ENCODE measurements at regions of chr1 and their contacts with region 1.

Region 1: DNA sequence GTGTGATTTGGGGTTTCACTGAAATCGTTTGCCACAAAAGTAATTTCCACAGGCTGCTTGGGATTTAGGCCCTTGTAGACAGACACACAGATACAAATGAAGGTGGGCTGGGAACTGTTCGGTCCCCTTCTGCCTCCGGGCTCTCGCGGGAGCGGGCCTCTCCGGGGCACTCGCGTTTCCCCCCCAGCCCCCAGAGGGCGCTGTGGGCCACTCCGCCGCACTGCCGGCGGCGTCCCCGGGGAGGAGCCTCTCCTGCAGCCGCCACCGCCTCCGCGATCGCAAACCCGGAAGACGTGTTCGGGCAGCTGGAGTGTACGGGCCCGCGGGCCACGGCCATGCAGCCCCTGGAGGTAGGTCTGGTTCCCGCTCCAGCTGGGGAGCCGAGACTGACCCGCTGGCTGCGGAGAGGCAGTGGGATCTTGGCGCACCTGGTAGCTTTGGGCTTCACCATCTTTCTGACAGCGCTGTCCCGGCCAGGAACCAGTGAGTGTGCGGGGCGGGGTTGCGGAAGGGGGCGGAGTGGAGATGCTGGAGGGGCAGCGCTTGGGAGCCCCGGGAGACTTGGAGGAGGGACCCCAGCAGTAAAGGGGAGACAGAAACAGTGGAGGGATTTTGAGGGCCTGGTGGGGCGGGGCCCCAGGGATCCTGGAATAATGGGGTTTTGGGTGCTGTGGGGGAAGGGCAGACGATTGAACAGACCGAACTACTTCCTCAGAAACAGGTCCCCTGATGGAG is at the start of gene CYB561D1:
- DNase-seq: peak; percentile 95
- H3K4me3 ChIP-seq: peak within 1 kb of the TSS; percentile 96 to 100
- H3K27ac ChIP-seq: peak within 1 kb of the TSS; percentile 64 to 81; a peak in 3 of 4 replicates
- H3K4me1 ChIP-seq: peaks cover 0 to 19% of the 10 kb centered on the region in 2 experiments; a peak in 2 of 4 replicates
- H3K27me3 ChIP-seq: no peaks in the 10 kb centered on the region
- CTCF ChIP-seq: peak; percentile 89
- EP300 ChIP-seq: peak; percentile 27 to 38; a peak in 1 of 4 replicates
- RAD21 ChIP-seq: peak; percentile 51
- polyA plus RNA-seq, gene CYB561D1: 5.4 and 8.9 TPM in 2 replicates

Region 2: GRCh38 chr1:109483672-109484518 is 10.1 kb before region 1 on chr1 and contains the start of gene ATXN7L2:
- CTCF ChIA-PET with region 1: interaction called, 238 read pairs
- POLR2A ChIA-PET with region 1: no interaction called
- DNase-seq: peak; percentile 100
- H3K4me3 ChIP-seq: peak within 1 kb of the TSS; percentile 64 to 82
- H3K27ac ChIP-seq: peak within 1 kb of the TSS; percentile 70 to 93
- H3K4me1 ChIP-seq: peaks cover 6 to 15% of the 10 kb centered on the region in 2 experiments; a peak in 2 of 4 replicates
- H3K27me3 ChIP-seq: peaks cover 23% of the 10 kb centered on the region
- CTCF ChIP-seq: no peak
- EP300 ChIP-seq: 0 out of 4 replicates have a peak, but pooled peaks of 1 of the 2 experiments have one; percentile 18
- RAD21 ChIP-seq: no peak
- polyA plus RNA-seq, gene ATXN7L2: 3.9 and 4.0 TPM in 2 replicates

Region 3: DNA sequence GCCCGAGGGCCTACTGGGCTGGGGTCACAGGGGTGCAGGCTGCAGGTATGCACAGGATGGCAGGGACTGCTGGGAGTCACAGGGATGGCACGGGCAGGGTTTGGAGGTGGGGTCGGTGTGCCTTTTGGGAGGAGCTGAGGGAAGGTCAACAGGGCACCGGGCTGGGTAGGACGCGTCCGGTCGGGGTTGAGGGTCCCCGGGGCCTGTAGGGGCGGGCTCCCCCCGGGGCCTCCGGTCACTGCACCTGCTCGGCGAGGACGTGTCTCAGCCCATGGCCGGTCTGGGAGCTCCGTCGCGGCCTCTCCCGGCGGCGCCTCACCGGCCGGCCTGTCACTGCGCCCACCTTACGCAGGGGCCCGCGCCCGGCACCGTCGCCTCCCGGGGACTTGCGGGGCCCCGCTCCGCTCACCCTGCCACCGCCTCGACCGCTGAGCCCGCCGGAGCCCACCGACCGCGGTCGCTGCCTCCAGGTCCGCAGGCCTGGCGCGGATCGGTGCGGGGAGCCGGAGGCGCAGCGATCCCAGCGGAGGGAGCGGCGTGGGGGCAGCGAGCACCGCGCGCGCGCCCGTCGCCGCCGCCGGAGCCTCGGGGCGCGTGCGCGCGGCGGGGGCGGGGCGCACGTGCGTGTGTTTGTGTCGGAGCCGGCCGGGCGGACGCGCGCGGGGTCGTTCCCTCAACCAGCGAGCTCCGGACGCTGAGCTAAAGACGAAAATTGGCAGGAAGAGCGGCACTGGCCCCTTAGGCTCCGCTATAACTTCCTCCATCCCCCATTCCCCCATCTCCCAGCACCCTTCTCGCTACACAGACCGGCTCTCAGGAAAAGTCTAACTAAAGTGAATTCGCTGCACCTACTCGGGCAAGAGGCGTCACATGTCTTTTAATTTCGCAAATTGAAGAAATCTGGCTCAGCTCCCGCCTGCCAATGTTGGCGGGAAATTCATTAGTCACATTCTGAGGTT is 15.5 kb after region 1 on chr1 and contains the start of gene AMIGO1:
- CTCF ChIA-PET with region 1: interaction called, 238 read pairs
- POLR2A ChIA-PET with region 1: interaction called, 3 read pairs
- DNase-seq: peak; percentile 94
- H3K4me3 ChIP-seq: peak within 1 kb of the TSS; percentile 69 to 71
- H3K27ac ChIP-seq: no peak within 1 kb of the TSS
- H3K4me1 ChIP-seq: peaks cover 0 to 11% of the 10 kb centered on the region in 2 experiments; a peak in 1 of 4 replicates
- H3K27me3 ChIP-seq: no peaks in the 10 kb centered on the region; the same call in 1 of the 2 replicates
- CTCF ChIP-seq: no peak
- EP300 ChIP-seq: no peak
- RAD21 ChIP-seq: no peak
- polyA plus RNA-seq, gene AMIGO1: 0.93 and 0.95 TPM in 2 replicates

Region 4: DNA sequence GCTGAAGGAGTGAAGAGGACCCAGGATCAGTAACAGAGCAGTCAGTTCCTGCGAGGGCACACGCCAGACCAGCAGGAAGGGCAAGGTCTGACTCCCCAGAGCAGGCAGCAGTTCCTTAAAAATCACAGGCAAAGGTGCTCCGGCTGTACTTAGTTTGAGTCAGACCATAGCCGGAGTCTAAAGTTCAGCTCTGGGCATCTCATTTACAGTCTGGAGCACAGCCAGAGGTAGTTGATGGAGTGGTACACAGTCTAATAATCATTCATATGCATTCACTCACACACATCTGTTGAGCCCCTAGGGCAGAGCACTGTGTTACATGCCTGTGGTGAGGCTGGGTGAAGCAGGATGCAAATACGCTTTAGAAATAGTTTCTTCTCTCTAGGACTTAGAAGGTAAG is 22.9 kb after region 1 on chr1:
- CTCF ChIA-PET with region 1: interaction called, 1,710 read pairs
- POLR2A ChIA-PET with region 1: no interaction called
- DNase-seq: no peak
- H3K4me3 ChIP-seq: no peak overlapping the region
- H3K27ac ChIP-seq: no peak overlapping the region
- H3K4me1 ChIP-seq: peaks cover 0 to 8% of the 10 kb centered on the region in 2 experiments; a peak in 1 of 4 replicates
- H3K27me3 ChIP-seq: no peaks in the 10 kb centered on the region; the same call in 1 of the 2 replicates
- CTCF ChIP-seq: no peak
- EP300 ChIP-seq: no peak
- RAD21 ChIP-seq: no peak